Activated T-helper 1 cell treated with anti-CD3 and anti-CD28 coated beads, Interleukin-12 subunit alpha, Interleukin-12 subunit beta, Interleukin-2, Interleukin-4 antibody, amounts not matched to agents 30 ng/mL and 10 ng/mL and 1 ng/mL, durations not matched to agents 14 hours and 24 hours and 36 hours (primary cell): ENCODE measurements at regions of chr4 and their contacts with region 1.

Region 1: DNA sequence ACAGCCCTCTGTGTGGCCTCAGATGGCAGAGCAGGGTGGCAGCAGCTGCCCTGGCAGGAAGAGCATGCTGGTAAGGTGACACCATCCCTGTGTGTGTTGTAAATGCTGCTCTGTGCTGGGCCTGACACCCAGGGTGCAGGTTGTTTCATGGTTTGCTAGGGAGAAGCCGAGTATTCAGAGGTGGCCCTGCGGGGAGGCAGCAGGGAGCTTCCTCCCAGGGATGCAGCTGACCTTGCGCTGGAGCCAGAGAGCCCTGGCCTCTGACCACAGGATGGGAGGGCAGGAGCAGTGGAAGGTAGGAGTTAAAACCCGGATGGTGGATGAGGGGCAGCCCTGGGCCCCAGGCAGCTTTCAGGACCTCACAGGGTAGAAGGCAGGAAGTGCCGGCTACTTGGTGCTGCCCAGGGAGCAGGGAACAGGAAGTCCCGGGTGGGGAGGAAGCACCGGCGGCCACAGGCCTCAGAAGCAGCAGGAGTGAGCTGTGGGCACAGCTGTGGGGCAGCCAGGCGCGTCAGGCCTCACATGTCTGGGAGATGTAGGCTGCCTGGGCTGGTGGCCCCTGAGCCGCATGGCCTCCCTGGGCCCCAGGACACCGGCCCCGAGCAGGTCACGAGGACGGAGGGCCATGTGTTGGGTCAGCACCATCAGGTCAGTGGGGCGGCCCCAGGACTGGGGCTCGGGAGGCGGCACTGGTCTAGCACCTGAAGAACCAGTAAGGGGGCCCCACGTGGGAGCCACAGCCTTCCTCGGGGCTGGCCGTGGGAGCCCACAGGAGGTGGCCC is 19.1 kb downstream of the SH3BP2 start:
- DNase-seq: peak; percentile 54
- H3K4me3 Mint-ChIP-seq: peak overlapping the region; percentile 94
- H3K27ac Mint-ChIP-seq: peak overlapping the region; percentile 96
- H3K4me1 Mint-ChIP-seq: peaks cover 60% of the 10 kb centered on the region
- H3K27me3 Mint-ChIP-seq: no peaks in the 10 kb centered on the region

Region 2: DNA sequence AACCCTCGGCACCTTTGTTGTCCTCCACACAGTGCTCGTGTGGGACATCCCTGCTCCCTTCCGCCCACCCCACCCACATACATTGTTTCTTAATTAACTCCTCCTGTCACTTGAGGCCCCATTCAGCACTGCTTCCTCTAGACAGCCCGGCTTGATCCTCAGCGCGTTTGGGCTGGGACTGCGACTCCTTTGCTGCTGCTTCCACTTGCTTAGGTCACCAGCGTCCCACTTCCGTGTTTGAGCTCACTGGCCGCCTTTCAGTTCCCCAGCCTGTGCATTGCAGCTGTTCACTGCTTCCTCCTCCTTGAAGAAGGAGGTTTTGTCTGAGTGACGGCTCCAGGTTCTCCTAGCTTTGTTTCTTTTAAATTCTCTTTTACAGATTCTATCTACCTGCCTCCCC is 327.0 kb before region 1 on chr4:
- intact Hi-C with region 1: no loop called
- DNase-seq: peak; percentile 59
- H3K4me3 Mint-ChIP-seq: peak overlapping the region; percentile 41
- H3K27ac Mint-ChIP-seq: peak overlapping the region; percentile 78
- H3K4me1 Mint-ChIP-seq: peaks cover 76% of the 10 kb centered on the region
- H3K27me3 Mint-ChIP-seq: no peaks in the 10 kb centered on the region

Region 3: DNA sequence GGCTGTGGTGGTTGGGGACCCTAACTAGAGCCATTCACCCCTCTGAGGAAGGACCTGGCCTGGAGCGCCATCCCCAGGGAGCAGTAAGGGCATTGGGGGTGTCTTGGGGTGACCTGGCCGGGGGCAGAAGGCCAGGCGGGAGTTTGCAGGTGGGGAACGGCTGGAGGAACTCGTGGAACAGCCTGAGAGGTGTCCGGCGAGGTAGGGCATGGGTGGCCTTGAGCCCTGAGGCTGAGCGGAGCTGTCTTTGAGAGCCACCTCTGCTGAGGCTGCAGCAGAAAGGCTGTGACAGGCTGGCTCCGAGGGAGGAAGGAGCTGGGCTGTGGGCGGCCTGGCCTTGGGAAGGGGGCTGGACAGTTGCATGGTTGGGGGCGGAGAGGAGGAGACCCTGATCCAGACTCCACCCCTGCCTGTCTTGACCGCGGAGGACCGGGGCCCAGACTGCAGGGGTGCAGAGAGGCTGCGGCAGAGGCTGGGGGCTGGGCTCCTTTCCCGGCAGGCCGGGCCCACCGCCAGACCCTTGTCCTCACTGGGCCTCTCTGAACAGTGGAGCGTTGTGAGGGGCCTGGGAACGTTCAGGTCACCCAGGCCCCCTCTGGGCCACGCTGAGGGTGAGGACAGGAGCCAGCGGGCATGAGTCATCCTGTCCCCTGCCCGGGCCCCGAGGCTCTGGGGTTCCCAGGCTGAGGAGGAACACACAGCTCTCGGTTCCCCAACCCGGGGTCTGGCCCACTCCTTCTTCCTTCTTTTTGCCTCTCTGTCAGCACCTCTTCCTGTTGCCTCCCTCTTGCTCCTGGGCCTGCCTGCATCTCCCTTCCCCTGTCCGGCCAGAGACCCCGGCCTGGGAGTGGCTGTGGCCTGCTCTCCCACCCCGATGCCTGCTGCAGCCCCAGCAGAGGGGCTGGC is 11.1 kb before region 1 on chr4:
- intact Hi-C with region 1: loop called (anchors 1 kb)
- DNase-seq: no peak
- H3K4me3 Mint-ChIP-seq: peak overlapping the region; percentile 78
- H3K27ac Mint-ChIP-seq: peak overlapping the region; percentile 48
- H3K4me1 Mint-ChIP-seq: peaks cover 36% of the 10 kb centered on the region
- H3K27me3 Mint-ChIP-seq: no peaks in the 10 kb centered on the region

Region 4: DNA sequence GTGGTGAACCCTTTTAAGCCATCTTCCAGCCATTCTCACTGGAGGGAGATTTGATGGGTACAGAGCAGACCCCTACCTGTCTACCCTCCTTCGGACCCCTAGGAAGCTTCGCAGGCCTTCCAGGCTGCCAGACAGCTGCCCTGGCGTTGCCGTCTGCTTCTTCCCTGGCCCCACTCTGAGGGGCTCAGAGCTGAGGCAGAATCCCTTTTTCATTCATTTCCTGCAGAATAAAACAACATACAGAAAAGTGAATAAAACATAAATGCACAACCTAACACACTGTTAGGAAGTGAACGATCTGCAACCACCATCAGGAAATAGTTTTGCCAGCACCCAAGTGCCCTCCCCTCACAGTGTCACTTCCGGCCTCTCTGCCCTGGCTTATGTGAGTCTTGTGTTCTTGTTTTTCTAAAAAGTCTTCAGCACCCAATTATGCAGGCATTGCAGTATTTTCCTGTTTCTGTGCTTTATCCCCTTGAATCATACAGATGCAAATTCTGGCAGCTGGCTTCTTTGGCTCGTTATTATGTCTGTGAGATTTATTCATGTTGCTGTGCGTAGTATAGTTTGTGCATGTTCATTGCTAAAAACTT is 26.0 kb after region 1 on chr4:
- intact Hi-C with region 1: loop called (anchors 1 kb)
- DNase-seq: peak; percentile 65
- H3K4me3 Mint-ChIP-seq: peak overlapping the region; percentile 78
- H3K27ac Mint-ChIP-seq: peak overlapping the region; percentile 84
- H3K4me1 Mint-ChIP-seq: peaks cover 42% of the 10 kb centered on the region
- H3K27me3 Mint-ChIP-seq: no peaks in the 10 kb centered on the region

Region 5: DNA sequence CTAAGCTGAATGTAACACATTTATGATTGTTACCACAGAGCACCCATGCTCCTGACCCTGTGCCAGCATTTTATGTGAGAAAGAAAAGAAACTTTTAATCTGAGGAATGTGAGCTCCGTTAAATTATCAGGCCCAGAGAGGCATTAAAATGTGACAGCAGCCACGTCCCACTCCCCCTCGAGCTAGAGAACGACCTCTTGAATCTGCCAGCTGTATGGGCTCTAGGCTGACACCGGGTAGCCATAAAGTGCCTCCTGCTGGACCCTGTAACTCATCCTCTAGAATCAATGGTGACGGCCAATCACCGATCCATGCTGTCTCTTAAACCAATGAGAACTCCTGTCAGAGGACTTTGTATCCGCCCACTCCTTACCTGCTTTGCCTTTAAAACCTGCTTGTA is 843.9 kb after region 1 on chr4:
- intact Hi-C with region 1: no loop called
- DNase-seq: no peak
- H3K4me3 Mint-ChIP-seq: no peak overlapping the region
- H3K27ac Mint-ChIP-seq: no peak overlapping the region
- H3K4me1 Mint-ChIP-seq: no peaks in the 10 kb centered on the region
- H3K27me3 Mint-ChIP-seq: peaks cover 2% of the 10 kb centered on the region